IMR-90 (cell line): ENCODE measurements at regions of chr18 and their contacts with region 1.

Region 1: GRCh38 chr18:5895885-5896740 is 791 bp upstream of the TMEM200C start:
- DNase-seq: peak; percentile 74
- ATAC-seq: peak; percentile 73
- H3K4me3 ChIP-seq: peak overlapping the region; percentile 99
- H3K27ac ChIP-seq: peak overlapping the region; percentile 96
- H3K4me1 ChIP-seq: peaks cover 13% of the 10 kb centered on the region; the same call in 1 of the 2 replicates
- H3K27me3 ChIP-seq: no peaks in the 10 kb centered on the region
- CTCF ChIP-seq: no peak
- POLR2A ChIP-seq: peak; percentile 77; the same call in 1 of the 2 replicates
- RAD21 ChIP-seq: peak; percentile 16; the same call in 1 of the 2 replicates

Region 2: GRCh38 chr18:6056146-6056932 is 160.2 kb after region 1 on chr18:
- CTCF ChIA-PET with region 1: no interaction called
- POLR2A ChIA-PET with region 1: no interaction called
- dilution Hi-C with region 1: no loop called
- in situ Hi-C with region 1: no loop called
- intact Hi-C with region 1: loop called (anchors 5 kb)
- DNase-seq: peak; percentile 77
- ATAC-seq: peak; percentile 76
- H3K4me3 ChIP-seq: no peak overlapping the region
- H3K27ac ChIP-seq: peak overlapping the region; percentile 76
- H3K4me1 ChIP-seq: peaks cover 14% of the 10 kb centered on the region
- H3K27me3 ChIP-seq: no peaks in the 10 kb centered on the region
- CTCF ChIP-seq: no peak
- POLR2A ChIP-seq: peak; percentile 68
- RAD21 ChIP-seq: 0 out of 2 replicates have a peak, but pooled peaks have one; percentile 12